ENCODE measurements at regions of chr5 and their contacts with region 1.

Region 1: DNA sequence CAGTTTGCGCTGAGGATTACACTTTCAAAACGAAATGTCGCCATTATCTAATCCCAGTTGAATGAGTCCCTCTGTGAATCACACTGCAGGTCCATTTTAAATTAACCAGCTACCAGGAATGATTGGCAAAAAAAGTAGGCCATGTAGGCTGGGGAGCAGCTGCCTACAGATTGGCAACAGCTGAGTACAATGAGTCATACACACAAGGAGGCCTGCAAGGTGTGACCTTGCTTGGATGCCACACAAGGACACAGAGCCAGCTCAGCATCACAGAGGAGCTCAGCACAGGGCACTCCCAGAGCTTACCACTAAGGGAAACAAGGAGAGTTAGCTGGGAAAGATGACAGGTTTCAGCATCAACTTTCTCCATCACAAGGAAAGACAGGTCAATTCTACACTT is 12.9 kb downstream of the HAVCR1 start:
- DNase-seq: no peak

Region 2: DNA sequence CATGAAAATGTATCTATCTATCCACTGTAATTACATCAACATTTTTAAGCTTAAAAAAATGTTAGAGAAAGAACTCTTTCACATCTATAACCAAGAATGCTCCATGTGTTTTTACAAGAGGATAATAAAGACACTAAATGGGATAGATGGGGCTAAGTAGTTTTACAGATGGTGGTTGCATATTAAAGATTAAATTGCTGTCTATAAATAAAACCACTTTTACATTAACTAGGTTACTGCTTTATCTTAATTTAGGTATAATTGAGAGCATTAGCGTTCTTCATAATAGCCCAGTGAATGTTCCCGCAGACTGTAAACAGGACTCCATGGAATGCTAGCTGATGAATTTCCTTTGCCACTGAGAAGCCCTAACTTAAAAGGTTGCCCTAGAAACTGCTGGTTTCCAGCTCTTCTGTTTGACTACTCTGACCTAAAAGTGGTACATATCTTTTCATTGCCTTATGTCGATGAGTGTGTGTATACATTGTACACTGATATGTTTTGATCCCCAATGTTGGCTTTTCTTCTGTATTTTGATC is 601.2 kb before region 1 on chr5:
- intact Hi-C with region 1: loop called in 1 of 2 experiments (anchors 5 kb)
- DNase-seq: no peak

Region 3: DNA sequence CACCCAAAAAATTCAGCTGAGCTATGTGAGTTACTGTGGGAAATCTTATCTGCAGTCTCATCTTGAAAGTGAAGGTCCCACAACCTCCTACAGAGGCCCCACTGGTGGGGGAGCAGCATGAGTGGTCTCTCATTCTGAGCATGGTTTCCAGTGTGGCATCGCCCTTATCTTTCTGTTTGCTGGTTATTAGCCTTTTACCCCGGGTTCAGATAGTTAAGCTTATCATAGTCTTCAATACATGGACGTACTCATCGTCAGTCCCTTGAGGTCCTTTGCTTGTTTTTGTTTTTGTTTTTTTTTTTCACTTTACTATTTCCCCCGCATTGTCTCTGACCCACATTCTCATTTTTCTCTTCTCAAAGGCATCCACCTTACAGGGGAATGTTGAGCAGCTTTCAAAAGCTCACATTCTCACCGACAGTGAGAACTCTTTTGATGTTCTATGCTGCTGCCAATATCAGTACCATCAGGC is 70.5 kb after region 1 on chr5:
- intact Hi-C with region 1: no loop called
- DNase-seq: no peak

Measured in posterior vena cava (tissue), 2 donors.